Dendritic cell treated with granulocyte-macrophage colony-stimulating factor and Interleukin-4, amounts not matched to agents 40 ng/mL and 50 ng/mL, for 4 days (primary cell): ENCODE measurements at regions of chr5 and their contacts with region 1.

Region 1: GRCh38 chr5:14685757-14686156 is 21.2 kb downstream of the OTULIN start:
- H3K4me3 Mint-ChIP-seq: no peak overlapping the region
- H3K27ac Mint-ChIP-seq: no peak overlapping the region
- H3K4me1 Mint-ChIP-seq: peaks cover 7% of the 10 kb centered on the region
- H3K27me3 Mint-ChIP-seq: no peaks in the 10 kb centered on the region

Region 2: GRCh38 chr5:14977058-14977685 is 291.4 kb after region 1 on chr5:
- intact Hi-C with region 1: no loop called
- H3K4me3 Mint-ChIP-seq: no peak overlapping the region
- H3K27ac Mint-ChIP-seq: no peak overlapping the region
- H3K4me1 Mint-ChIP-seq: peaks cover 17% of the 10 kb centered on the region
- H3K27me3 Mint-ChIP-seq: peaks cover 6% of the 10 kb centered on the region

Region 3: GRCh38 chr5:15013654-15014463 is 328.1 kb after region 1 on chr5:
- intact Hi-C with region 1: loop called (anchors 1 kb)
- H3K4me3 Mint-ChIP-seq: no peak overlapping the region
- H3K27ac Mint-ChIP-seq: no peak overlapping the region
- H3K4me1 Mint-ChIP-seq: no peaks in the 10 kb centered on the region
- H3K27me3 Mint-ChIP-seq: peaks cover 11% of the 10 kb centered on the region